ENCODE measurements at regions of chr9 and their contacts with region 1.

Region 1: GRCh38 chr9:101530077-101530711 is 3.5 kb upstream of the RNF20 start:
- DNase-seq: peak in 1 of 2 experiments; percentile 69
- H3K4me3 ChIP-seq: no peak overlapping the region
- H3K27ac ChIP-seq: no peak overlapping the region
- H3K4me1 ChIP-seq: no peaks in the 10 kb centered on the region
- H3K27me3 ChIP-seq: no peaks in the 10 kb centered on the region
- CTCF ChIP-seq: peak; percentile 47 to 87 (median 74)
- EP300 ChIP-seq: no peak
- POLR2A ChIP-seq: no peak
- RAD21 ChIP-seq: peak; percentile 82 to 85

Region 2: GRCh38 chr9:101307051-101307450 is 223.1 kb before region 1 on chr9:
- CTCF ChIA-PET with region 1: no interaction called
- POLR2A ChIA-PET with region 1: no interaction called
- DNase-seq: no peak
- H3K4me3 ChIP-seq: no peak overlapping the region
- H3K27ac ChIP-seq: no peak overlapping the region
- H3K4me1 ChIP-seq: no peaks in the 10 kb centered on the region
- H3K27me3 ChIP-seq: no peaks in the 10 kb centered on the region
- CTCF ChIP-seq: no peak
- EP300 ChIP-seq: no peak
- POLR2A ChIP-seq: no peak
- RAD21 ChIP-seq: no peak

Region 3: GRCh38 chr9:101477736-101478135 is 52.5 kb before region 1 on chr9:
- CTCF ChIA-PET with region 1: interaction called, 16 read pairs
- POLR2A ChIA-PET with region 1: interaction called, 3 read pairs
- DNase-seq: no peak
- H3K4me3 ChIP-seq: no peak overlapping the region
- H3K27ac ChIP-seq: no peak overlapping the region
- H3K4me1 ChIP-seq: peaks cover 0 to 4% (median 1%) of the 10 kb centered on the region in 4 experiments; a peak in 2 of 7 replicates
- H3K27me3 ChIP-seq: no peaks in the 10 kb centered on the region
- CTCF ChIP-seq: no peak
- EP300 ChIP-seq: no peak
- POLR2A ChIP-seq: no peak
- RAD21 ChIP-seq: no peak

Region 4: DNA sequence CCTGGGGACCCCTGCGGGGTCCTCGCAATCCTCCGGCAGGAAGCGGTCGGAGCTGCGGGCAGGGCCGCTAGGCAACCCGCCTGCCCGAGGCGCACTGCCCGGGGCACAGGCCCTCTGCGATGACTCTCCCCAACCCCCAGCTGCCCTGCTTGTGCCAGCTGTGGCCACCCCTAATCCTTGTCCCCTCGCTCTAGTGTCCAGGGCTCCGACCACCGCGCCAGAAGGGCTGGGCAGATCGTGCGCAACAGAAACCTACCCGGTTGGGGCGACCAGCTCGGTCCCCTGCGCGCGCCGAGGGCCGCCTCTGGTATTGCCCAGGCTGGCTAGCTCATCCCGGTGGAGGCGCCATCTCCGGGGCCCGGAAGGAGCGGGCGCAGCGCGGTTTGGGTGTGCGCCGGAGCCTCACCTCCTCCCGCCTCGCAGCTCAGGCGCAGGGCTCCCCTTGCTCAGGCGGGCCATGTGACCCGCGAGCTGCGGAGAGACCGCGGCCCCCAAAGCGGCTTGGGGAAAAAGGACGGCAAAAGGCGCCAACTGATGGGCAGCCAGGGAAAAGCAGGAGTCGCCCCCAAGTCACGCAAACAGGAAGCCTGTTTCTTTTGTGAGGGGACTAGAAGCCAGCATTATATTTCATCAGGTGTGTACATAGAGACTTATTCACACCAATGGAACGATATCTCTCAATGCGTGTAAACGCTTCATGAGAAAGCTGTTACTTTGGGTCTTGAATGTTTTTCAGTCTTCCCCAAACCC is 43.3 kb before region 1 on chr9:
- CTCF ChIA-PET with region 1: interaction called, 40 read pairs
- POLR2A ChIA-PET with region 1: interaction called, 7 read pairs
- DNase-seq: peak; percentile 72 to 87
- H3K4me3 ChIP-seq: peak overlapping the region; percentile 70 to 87 (median 74)
- H3K27ac ChIP-seq: peak overlapping the region; percentile 25; the same call in 1 of the 2 replicates
- H3K4me1 ChIP-seq: peaks cover 5 to 9% (median 7%) of the 10 kb centered on the region in 4 experiments; a peak in 6 of 7 replicates
- H3K27me3 ChIP-seq: peaks cover 0 to 5% (median 2%) of the 10 kb centered on the region in 4 experiments; a peak in 5 of 7 replicates
- CTCF ChIP-seq: peak; percentile 61 to 70 (median 67)
- EP300 ChIP-seq: no peak
- POLR2A ChIP-seq: peak; percentile 17 to 60; a peak in 2 of 3 replicates
- RAD21 ChIP-seq: peak; percentile 67 to 72

Region 5: GRCh38 chr9:101504188-101504587 is 26.0 kb before region 1 on chr9:
- CTCF ChIA-PET with region 1: interaction called, 20 read pairs
- POLR2A ChIA-PET with region 1: no interaction called
- DNase-seq: no peak
- H3K4me3 ChIP-seq: no peak overlapping the region
- H3K27ac ChIP-seq: no peak overlapping the region
- H3K4me1 ChIP-seq: no peaks in the 10 kb centered on the region
- H3K27me3 ChIP-seq: no peaks in the 10 kb centered on the region
- CTCF ChIP-seq: no peak
- EP300 ChIP-seq: no peak
- POLR2A ChIP-seq: no peak
- RAD21 ChIP-seq: no peak

Region 6: DNA sequence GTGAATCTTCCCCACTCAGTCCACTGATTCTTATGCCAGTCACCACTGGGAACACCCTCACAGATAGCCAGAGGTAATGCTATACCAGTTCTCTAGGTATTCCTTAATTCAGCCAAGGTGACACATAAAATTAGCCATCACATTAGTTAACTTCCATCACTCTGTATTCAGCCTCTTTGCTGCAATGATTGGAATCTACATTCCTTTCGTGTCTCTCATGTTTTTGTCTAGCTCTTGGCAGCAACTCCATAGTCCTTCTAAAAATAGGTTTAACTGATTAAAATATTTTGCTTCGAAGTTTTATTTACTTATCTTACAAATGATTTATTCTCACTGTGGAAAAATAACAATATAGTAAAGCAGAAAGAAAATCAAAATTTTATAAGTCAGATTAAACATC is 16.1 kb before region 1 on chr9:
- CTCF ChIA-PET with region 1: interaction called, 22 read pairs
- POLR2A ChIA-PET with region 1: interaction called, 6 read pairs
- DNase-seq: no peak
- H3K4me3 ChIP-seq: 0 out of 8 replicates have a peak overlapping the region, but pooled peaks of 1 of the 4 experiments have one; percentile 8
- H3K27ac ChIP-seq: no peak overlapping the region
- H3K4me1 ChIP-seq: peaks cover 2 to 16% (median 13%) of the 10 kb centered on the region in 4 experiments; a peak in 6 of 7 replicates
- H3K27me3 ChIP-seq: no peaks in the 10 kb centered on the region
- CTCF ChIP-seq: no peak
- EP300 ChIP-seq: no peak
- POLR2A ChIP-seq: no peak
- RAD21 ChIP-seq: no peak

Region 7: DNA sequence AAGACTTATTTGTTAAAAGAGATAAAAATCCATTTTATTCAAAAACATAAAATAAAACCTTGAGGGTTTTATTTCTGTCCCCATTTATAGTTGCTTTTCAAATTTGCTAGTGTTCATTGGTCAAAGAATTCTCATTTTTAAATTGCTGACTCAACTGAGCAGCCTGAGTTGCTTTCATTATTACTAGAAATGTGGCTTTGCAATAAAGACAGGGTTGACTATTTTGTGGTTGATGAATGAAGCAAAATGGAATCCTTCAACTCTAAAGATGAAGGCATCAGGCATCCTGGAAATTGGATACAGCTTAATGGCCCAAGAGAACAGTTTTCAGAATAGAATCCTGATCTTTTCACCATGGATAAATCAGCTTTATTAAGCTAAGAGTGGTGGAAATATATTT is 88.5 kb after region 1 on chr9:
- CTCF ChIA-PET with region 1: no interaction called
- POLR2A ChIA-PET with region 1: no interaction called
- DNase-seq: no peak
- H3K4me3 ChIP-seq: no peak overlapping the region
- H3K27ac ChIP-seq: no peak overlapping the region
- H3K4me1 ChIP-seq: no peaks in the 10 kb centered on the region
- H3K27me3 ChIP-seq: no peaks in the 10 kb centered on the region
- CTCF ChIP-seq: no peak
- EP300 ChIP-seq: no peak
- POLR2A ChIP-seq: no peak
- RAD21 ChIP-seq: no peak